Prostate gland (tissue), 2 donors: ENCODE measurements at regions of chr15 and their contacts with region 1.

Region 1: GRCh38 chr15:88484682-88485331 is 17.3 kb downstream of the MRPS11 start:
- DNase-seq: no peak
- H3K4me3 ChIP-seq: no peak overlapping the region
- H3K27ac ChIP-seq: no peak overlapping the region
- H3K4me1 ChIP-seq: no peaks in the 10 kb centered on the region
- H3K27me3 ChIP-seq: no peaks in the 10 kb centered on the region
- CTCF ChIP-seq: no peak
- POLR2A ChIP-seq: no peak

Region 2: GRCh38 chr15:88467073-88467934 is 17.5 kb before region 1 on chr15 and contains the starts of genes MRPL46 and MRPS11:
- intact Hi-C with region 1: no loop called
- DNase-seq: peak; percentile 88
- H3K4me3 ChIP-seq: peak within 1 kb of the TSS; percentile 66 to 84
- H3K27ac ChIP-seq: peak within 1 kb of the TSS; percentile 87 to 92
- H3K4me1 ChIP-seq: no peaks in the 10 kb centered on the region
- H3K27me3 ChIP-seq: no peaks in the 10 kb centered on the region
- CTCF ChIP-seq: no peak
- POLR2A ChIP-seq: no peak
- total RNA-seq, gene MRPL46: 20.4 to 32.0 TPM
- total RNA-seq, gene MRPS11: 35.7 to 36.4 TPM

Region 3: GRCh38 chr15:88533376-88533775 is 48.6 kb after region 1 on chr15:
- intact Hi-C with region 1: loop called (anchors 5 kb)
- DNase-seq: no peak
- H3K4me3 ChIP-seq: no peak overlapping the region
- H3K27ac ChIP-seq: no peak overlapping the region
- H3K4me1 ChIP-seq: no peaks in the 10 kb centered on the region
- H3K27me3 ChIP-seq: no peaks in the 10 kb centered on the region
- CTCF ChIP-seq: no peak
- POLR2A ChIP-seq: no peak